ENCODE measurements at regions of chr17 and their contacts with region 1.

Region 1: DNA sequence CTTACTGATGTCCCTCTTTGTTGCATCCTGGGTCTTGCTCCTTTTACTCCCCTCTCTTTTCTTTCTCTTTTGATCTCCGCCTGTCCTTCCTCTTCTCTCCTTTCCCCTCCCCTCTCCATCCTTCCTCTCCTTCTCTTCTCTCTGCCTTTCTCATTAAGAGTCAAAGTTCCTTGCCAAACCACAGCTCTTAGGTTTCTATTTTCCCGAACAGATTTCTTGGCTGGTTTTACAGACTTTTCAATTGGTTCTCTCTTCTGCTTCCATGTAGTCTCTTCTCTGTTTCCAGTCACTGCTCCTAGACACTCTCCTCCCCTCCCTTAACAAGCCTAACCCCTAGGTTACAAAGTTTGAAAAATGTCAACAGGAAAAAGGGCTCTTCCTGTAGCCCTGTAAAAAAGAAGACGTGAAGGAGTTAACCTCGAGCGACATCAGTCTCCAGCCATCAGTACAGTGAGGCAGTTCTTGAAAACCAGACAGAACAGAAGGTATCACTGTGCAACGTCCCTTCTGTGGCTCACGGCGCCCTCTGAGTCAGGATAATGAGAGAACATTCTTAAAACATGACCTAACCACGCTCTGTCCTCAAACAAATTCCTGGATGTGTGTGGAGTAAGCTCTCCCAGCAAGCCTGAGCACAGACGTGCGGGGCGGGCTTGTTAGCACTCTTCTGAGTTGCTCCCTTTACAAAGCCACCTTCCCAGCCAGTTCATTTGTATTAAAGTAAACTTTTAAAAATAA is 11.5 kb upstream of the MARCHF10 start:
- DNase-seq: peak; percentile 56 to 92
- H3K4me3 ChIP-seq: peak overlapping the region in 1 of 2 donors; percentile 30
- H3K27ac ChIP-seq: peak overlapping the region; percentile 58 to 66
- H3K4me1 ChIP-seq: peaks cover 4 to 6% of the 10 kb centered on the region in 2 donors
- H3K27me3 ChIP-seq: no peaks in the 10 kb centered on the region
- CTCF ChIP-seq: no peak

Region 2: GRCh38 chr17:62780315-62780714 is 39.3 kb before region 1 on chr17:
- intact Hi-C with region 1: loop called (anchors 5 kb)
- DNase-seq: no peak
- H3K4me3 ChIP-seq: peak overlapping the region in 1 of 2 donors; percentile 46
- H3K27ac ChIP-seq: peak overlapping the region; percentile 70 to 71
- H3K4me1 ChIP-seq: peaks cover 0 to 8% of the 10 kb centered on the region in 2 donors
- H3K27me3 ChIP-seq: no peaks in the 10 kb centered on the region
- CTCF ChIP-seq: peak in 1 of 3 experiments; percentile 15

Region 3: GRCh38 chr17:62860907-62861848 is 41.5 kb after region 1 on chr17:
- intact Hi-C with region 1: loop called (anchors 1 kb)
- DNase-seq: no peak
- H3K4me3 ChIP-seq: no peak overlapping the region
- H3K27ac ChIP-seq: no peak overlapping the region
- H3K4me1 ChIP-seq: peaks cover 3 to 6% of the 10 kb centered on the region in 2 donors
- H3K27me3 ChIP-seq: no peaks in the 10 kb centered on the region
- CTCF ChIP-seq: no peak

Region 4: GRCh38 chr17:62892870-62893338 is 73.3 kb after region 1 on chr17:
- intact Hi-C with region 1: no loop called
- DNase-seq: peak in 1 of 2 donors; percentile 70
- H3K4me3 ChIP-seq: no peak overlapping the region
- H3K27ac ChIP-seq: peak overlapping the region in 1 of 2 donors; percentile 48
- H3K4me1 ChIP-seq: peaks cover 6 to 11% of the 10 kb centered on the region in 2 donors
- H3K27me3 ChIP-seq: no peaks in the 10 kb centered on the region
- CTCF ChIP-seq: no peak

Region 5: DNA sequence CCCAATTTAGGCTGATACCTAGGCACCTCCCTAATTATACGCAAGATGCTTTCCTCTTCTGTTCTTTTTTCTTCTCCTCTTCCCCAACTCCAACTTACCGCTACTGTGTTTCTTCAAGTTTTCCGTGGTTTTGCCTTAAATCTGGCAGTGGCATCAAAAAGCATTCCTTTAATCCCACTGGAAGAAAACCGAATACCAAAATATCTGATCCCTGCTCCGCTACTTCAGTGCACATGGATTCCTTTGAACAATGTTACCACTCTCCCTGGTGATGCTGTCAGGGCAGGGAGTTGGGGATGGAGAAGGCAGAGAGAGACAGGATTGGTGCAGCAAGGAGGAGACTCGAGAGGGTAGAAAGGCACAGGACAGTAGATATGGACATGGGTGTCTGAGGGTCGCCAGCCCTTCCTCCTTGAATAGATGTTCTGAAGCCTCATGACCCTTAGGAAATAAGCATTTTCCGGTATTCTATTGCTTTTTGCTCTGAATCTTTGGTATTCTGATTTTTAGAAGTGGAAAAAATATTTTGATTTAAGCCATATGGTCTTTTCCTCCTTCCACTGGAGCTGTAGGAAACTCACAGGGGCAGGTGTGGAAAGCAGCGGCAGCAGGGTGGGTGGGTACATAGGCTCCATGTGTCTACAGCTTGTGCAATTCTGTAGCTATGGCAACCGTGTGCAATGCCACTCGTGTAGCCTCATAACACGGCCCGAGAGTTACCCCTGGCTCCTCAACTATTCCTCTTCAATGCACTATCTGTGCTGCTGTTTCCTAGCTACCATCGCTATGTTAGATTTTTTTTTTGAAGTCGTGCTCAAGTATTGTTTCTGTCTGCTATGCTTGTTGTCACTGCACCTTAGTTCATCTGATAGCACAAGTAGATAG is 114.1 kb after region 1 on chr17:
- intact Hi-C with region 1: no loop called
- DNase-seq: no peak
- H3K4me3 ChIP-seq: no peak overlapping the region
- H3K27ac ChIP-seq: no peak overlapping the region
- H3K4me1 ChIP-seq: no peaks in the 10 kb centered on the region
- H3K27me3 ChIP-seq: no peaks in the 10 kb centered on the region
- CTCF ChIP-seq: no peak

Region 6: GRCh38 chr17:62968445-62968923 is 148.8 kb after region 1 on chr17:
- intact Hi-C with region 1: loop called (anchors 2 kb)
- DNase-seq: peak in 1 of 2 donors; percentile 70
- H3K4me3 ChIP-seq: no peak overlapping the region
- H3K27ac ChIP-seq: no peak overlapping the region
- H3K4me1 ChIP-seq: peaks cover 0 to 7% of the 10 kb centered on the region in 2 donors
- H3K27me3 ChIP-seq: no peaks in the 10 kb centered on the region
- CTCF ChIP-seq: peak; percentile 68 to 80 (median 74)